ENCODE measurements at regions of chrX and their contacts with region 1.

Region 1: DNA sequence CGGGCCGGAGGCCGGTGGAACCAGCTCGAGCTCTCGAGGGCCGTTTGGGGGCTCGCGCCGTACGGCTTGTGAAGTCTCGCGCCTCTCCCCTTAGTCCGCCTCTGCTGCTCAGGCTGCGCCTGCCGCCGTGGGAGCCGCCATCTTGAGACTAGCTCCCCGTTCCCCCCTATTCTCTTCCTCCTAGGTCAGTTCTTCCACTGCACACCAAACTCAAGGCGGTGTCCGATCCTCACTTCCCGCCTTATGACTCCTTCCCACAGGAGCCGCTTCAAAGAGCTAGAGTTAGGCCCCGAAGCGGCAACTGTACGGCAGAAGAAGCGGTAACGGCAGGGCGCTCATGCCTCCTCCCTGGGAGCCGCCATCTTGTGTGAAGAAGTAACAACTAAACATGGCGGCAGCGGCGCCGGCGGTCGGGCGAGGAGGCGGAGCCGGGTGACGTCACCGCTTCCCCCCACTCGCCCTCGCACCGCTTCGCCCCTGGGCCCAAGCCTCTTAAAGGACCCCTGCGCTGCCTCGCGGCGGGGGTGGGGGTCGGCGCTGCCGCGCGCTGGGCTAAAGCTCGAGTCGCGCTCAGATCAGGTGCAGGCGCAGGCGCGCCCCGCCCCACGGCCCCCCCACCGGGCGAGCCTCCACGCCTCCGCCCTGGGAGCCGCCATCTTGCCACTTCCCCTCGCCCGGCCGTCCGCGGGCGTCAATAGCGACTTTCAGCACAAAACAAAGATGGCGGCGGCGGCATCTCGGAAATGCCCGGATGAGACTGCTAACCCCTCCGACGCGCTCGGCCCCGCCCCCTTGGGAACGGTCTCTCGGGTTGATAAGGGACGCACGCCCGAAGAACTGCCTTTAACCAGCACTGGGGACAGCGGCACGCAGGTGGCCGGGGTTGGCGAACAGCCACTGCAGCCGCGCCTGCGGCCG is at the start of gene HCFC1:
- DNase-seq: peak; percentile 82 to 98 (median 93)
- ATAC-seq: peak; percentile 65
- H3K4me3 ChIP-seq: peak within 1 kb of the TSS; percentile 97
- H3K4me3 Mint-ChIP-seq: peak within 1 kb of the TSS; percentile 91 to 100 (median 100)
- H3K27ac ChIP-seq: peak within 1 kb of the TSS; percentile 99
- H3K27ac Mint-ChIP-seq: peak within 1 kb of the TSS; percentile 93 to 100 (median 100)
- H3K4me1 ChIP-seq: peaks cover 28 to 29% of the 10 kb centered on the region in 2 donors
- H3K4me1 Mint-ChIP-seq: peaks cover 21 to 52% (median 34%) of the 10 kb centered on the region in 7 donors
- H3K27me3 ChIP-seq: no peaks in the 10 kb centered on the region
- H3K27me3 Mint-ChIP-seq: no peaks in the 10 kb centered on the region
- total RNA-seq, gene HCFC1: 52.3 to 106 (median 67.2) TPM

Region 2: DNA sequence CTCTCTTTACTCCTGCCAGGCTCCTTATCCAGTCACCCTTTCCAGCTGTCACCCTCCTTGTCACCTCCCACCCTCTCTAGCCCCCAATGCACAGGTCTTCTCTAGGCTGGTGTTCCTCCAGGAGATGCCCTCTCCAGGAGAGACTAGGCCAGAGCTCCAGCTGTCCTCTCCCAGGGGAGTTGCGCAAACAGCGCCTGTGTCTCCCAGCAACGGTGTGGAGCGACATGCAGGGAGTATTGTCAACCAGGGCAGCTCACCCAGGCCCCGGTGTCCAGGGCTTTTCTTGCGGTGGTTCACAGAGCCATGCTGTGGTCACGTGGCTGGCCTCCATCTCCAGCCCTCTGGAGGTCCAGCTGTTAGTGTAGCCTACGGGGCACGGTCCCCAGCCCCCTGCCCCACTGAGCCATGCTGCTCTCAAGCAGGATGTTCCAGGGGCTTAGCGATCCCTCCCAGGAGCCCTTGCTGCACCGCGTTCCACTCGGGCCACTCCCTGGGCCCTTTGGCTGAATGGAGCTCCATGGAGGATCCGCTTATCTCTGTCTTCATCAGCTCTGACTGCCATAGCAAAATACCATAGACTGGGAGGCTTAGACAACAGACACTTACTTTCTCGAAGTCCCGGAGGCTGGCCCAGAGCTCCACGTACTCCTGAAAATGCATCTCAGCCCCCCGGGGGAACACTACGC is 407.5 kb before region 1 on chrX:
- CTCF ChIA-PET with region 1: no interaction called
- POLR2A ChIA-PET with region 1: no interaction called
- intact Hi-C with region 1: no loop called
- DNase-seq: no peak
- ATAC-seq: no peak
- H3K4me3 ChIP-seq: no peak overlapping the region
- H3K4me3 Mint-ChIP-seq: no peak overlapping the region
- H3K27ac ChIP-seq: no peak overlapping the region
- H3K27ac Mint-ChIP-seq: peak overlapping the region in 1 of 9 donors; percentile 60
- H3K4me1 ChIP-seq: no peaks in the 10 kb centered on the region
- H3K4me1 Mint-ChIP-seq: peaks cover 0 to 4% (median 0%) of the 10 kb centered on the region in 7 donors
- H3K27me3 ChIP-seq: no peaks in the 10 kb centered on the region
- H3K27me3 Mint-ChIP-seq: no peaks in the 10 kb centered on the region

Region 3: DNA sequence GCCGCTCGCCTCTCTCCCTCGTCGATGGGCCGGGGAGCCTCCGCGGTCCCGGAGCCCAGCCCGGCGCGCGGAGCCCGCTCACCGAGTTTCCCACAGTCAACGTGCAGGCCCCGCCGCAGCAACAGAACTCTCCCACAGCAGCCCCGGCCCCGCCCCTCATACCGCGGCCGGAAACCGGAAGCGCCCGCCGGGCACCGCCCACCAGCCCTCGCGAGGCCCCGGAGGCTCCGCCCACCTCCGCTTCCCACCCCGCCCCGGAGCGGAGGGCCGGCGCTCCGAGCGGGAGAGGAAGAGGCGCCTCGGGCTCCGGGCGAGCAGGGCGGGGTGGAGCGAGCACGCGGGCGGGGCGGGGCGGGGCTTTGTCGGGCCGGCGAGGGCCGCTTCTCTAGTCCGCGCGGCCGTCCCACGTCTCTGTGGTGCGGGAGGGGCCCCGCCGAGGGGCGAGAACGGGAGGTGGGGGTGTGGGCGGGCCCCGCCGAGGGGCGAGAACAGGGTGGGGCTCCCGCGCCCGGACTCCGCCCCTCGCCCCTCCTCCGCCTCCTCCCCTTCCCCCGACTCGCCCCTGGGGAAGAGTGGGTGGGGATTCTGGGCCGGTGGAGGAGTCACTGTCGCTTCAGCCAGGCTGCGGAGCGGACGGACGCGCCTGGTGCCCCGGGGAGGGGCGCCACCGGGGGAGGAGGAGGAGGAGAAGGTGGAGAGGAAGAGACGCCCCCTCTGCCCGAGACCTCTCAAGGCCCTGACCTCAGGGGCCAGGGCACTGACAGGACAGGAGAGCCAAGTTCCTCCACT is 247.3 kb before region 1 on chrX and contains the starts of genes ABCD1 and BCAP31:
- CTCF ChIA-PET with region 1: no interaction called
- POLR2A ChIA-PET with region 1: interaction called, 4 read pairs
- intact Hi-C with region 1: loop called (anchors 1 kb)
- DNase-seq: peak; percentile 82 to 93 (median 91)
- ATAC-seq: peak; percentile 88
- H3K4me3 ChIP-seq: peak within 1 kb of the TSS; percentile 55
- H3K4me3 Mint-ChIP-seq: peak within 1 kb of the TSS; percentile 75 to 95 (median 86)
- H3K27ac ChIP-seq: peak within 1 kb of the TSS; percentile 80
- H3K27ac Mint-ChIP-seq: peak within 1 kb of the TSS in 8 of 9 donors; percentile 55 to 87 (median 72)
- H3K4me1 ChIP-seq: peaks cover 10 to 29% of the 10 kb centered on the region in 2 donors
- H3K4me1 Mint-ChIP-seq: peaks cover 9 to 37% (median 28%) of the 10 kb centered on the region in 7 donors
- H3K27me3 ChIP-seq: no peaks in the 10 kb centered on the region
- H3K27me3 Mint-ChIP-seq: no peaks in the 10 kb centered on the region
- total RNA-seq, gene ABCD1: 6.6 to 17.6 (median 10.2) TPM
- total RNA-seq, gene BCAP31: 80.2 to 153 (median 117) TPM

Region 4: GRCh38 chrX:153845842-153846241 is 125.9 kb before region 1 on chrX:
- CTCF ChIA-PET with region 1: no interaction called
- POLR2A ChIA-PET with region 1: no interaction called
- intact Hi-C with region 1: no loop called
- DNase-seq: no peak
- ATAC-seq: no peak
- H3K4me3 ChIP-seq: no peak overlapping the region
- H3K4me3 Mint-ChIP-seq: no peak overlapping the region
- H3K27ac ChIP-seq: no peak overlapping the region
- H3K27ac Mint-ChIP-seq: no peak overlapping the region
- H3K4me1 ChIP-seq: no peaks in the 10 kb centered on the region
- H3K4me1 Mint-ChIP-seq: no peaks in the 10 kb centered on the region
- H3K27me3 ChIP-seq: no peaks in the 10 kb centered on the region
- H3K27me3 Mint-ChIP-seq: peaks cover 0 to 34% (median 7%) of the 10 kb centered on the region in 5 donors

Region 5: DNA sequence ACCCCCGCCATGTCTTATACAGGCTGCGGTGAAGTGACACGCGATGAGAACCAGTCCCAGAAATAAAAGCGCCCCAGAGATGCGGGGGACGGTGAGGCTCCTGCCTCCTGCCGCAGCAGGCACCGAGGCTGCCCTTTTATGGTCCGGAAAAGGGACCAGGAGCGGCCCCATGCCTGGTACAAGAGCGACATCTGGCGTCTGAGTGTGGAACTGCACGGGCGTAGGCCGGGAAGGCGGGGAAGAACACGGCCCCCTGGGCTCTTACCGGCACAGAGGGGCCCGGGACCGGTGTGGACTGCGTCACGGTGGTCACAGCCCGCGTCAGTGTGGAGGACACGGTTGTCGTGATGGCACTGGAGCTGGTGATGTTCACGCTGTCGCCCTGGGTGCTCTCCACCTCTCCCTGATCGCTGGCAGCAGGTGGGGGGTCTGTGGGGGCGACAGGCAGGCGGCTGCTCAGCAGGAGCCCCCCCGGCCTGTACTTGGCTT is 18.3 kb before region 1 on chrX:
- CTCF ChIA-PET with region 1: interaction called, 22 read pairs
- POLR2A ChIA-PET with region 1: interaction called, 63 read pairs
- intact Hi-C with region 1: loop called in 1 of 2 experiments (anchors 2 kb)
- DNase-seq: peak; percentile 61 to 87 (median 78)
- ATAC-seq: peak; percentile 89
- H3K4me3 ChIP-seq: no peak overlapping the region
- H3K4me3 Mint-ChIP-seq: no peak overlapping the region
- H3K27ac ChIP-seq: no peak overlapping the region
- H3K27ac Mint-ChIP-seq: peak overlapping the region in 6 of 9 donors; percentile 4 to 82 (median 52)
- H3K4me1 ChIP-seq: peaks cover 4 to 6% of the 10 kb centered on the region in 2 donors
- H3K4me1 Mint-ChIP-seq: peaks cover 0 to 22% (median 7%) of the 10 kb centered on the region in 7 donors
- H3K27me3 ChIP-seq: no peaks in the 10 kb centered on the region
- H3K27me3 Mint-ChIP-seq: no peaks in the 10 kb centered on the region

Region 6: GRCh38 chrX:154019633-154020528 is 48.2 kb after region 1 on chrX and contains the start of gene IRAK1:
- CTCF ChIA-PET with region 1: interaction called, 3 read pairs
- POLR2A ChIA-PET with region 1: interaction called, 14 read pairs
- intact Hi-C with region 1: loop called in 1 of 2 experiments (anchors 2 kb)
- DNase-seq: peak; percentile 20 to 77 (median 42)
- ATAC-seq: peak; percentile 89
- H3K4me3 ChIP-seq: peak within 1 kb of the TSS; percentile 52
- H3K4me3 Mint-ChIP-seq: peak within 1 kb of the TSS; percentile 83 to 93 (median 88)
- H3K27ac ChIP-seq: peak within 1 kb of the TSS; percentile 85
- H3K27ac Mint-ChIP-seq: peak within 1 kb of the TSS; percentile 85 to 97 (median 92)
- H3K4me1 ChIP-seq: peaks cover 4 to 6% of the 10 kb centered on the region in 2 donors
- H3K4me1 Mint-ChIP-seq: peaks cover 0 to 17% (median 11%) of the 10 kb centered on the region in 7 donors
- H3K27me3 ChIP-seq: no peaks in the 10 kb centered on the region
- H3K27me3 Mint-ChIP-seq: no peaks in the 10 kb centered on the region
- total RNA-seq, gene IRAK1: 50.6 to 120 (median 61.6) TPM

Region 7: GRCh38 chrX:154378782-154379591 is 407.3 kb after region 1 on chrX and contains the start of gene EMD:
- CTCF ChIA-PET with region 1: no interaction called
- POLR2A ChIA-PET with region 1: interaction called, 3 read pairs
- intact Hi-C with region 1: loop called (anchors 1 kb)
- DNase-seq: peak; percentile 88 to 98 (median 96)
- ATAC-seq: peak; percentile 87
- H3K4me3 ChIP-seq: peak within 1 kb of the TSS; percentile 68
- H3K4me3 Mint-ChIP-seq: peak within 1 kb of the TSS; percentile 73 to 88 (median 84)
- H3K27ac ChIP-seq: peak within 1 kb of the TSS; percentile 99
- H3K27ac Mint-ChIP-seq: peak within 1 kb of the TSS; percentile 72 to 95 (median 92)
- H3K4me1 ChIP-seq: peaks cover 10 to 18% of the 10 kb centered on the region in 2 donors
- H3K4me1 Mint-ChIP-seq: peaks cover 4 to 21% (median 12%) of the 10 kb centered on the region in 7 donors
- H3K27me3 ChIP-seq: no peaks in the 10 kb centered on the region
- H3K27me3 Mint-ChIP-seq: no peaks in the 10 kb centered on the region
- total RNA-seq, gene EMD: 53.5 to 141 (median 89.9) TPM

Region 8: GRCh38 chrX:154762523-154763289 is 791.0 kb after region 1 on chrX and contains the start of gene DKC1:
- CTCF ChIA-PET with region 1: no interaction called
- POLR2A ChIA-PET with region 1: no interaction called
- intact Hi-C with region 1: loop called in 1 of 2 experiments (anchors 5 kb)
- DNase-seq: peak; percentile 85 to 95 (median 93)
- ATAC-seq: peak; percentile 94
- H3K4me3 ChIP-seq: peak within 1 kb of the TSS; percentile 61
- H3K4me3 Mint-ChIP-seq: peak within 1 kb of the TSS; percentile 85 to 92 (median 90)
- H3K27ac ChIP-seq: peak within 1 kb of the TSS; percentile 72
- H3K27ac Mint-ChIP-seq: peak within 1 kb of the TSS; percentile 89 to 97 (median 92)
- H3K4me1 ChIP-seq: peaks cover 9% of the 10 kb centered on the region in 2 donors
- H3K4me1 Mint-ChIP-seq: peaks cover 0 to 24% (median 18%) of the 10 kb centered on the region in 7 donors
- H3K27me3 ChIP-seq: no peaks in the 10 kb centered on the region
- H3K27me3 Mint-ChIP-seq: no peaks in the 10 kb centered on the region
- total RNA-seq, gene DKC1: 50.5 to 75.0 (median 66.5) TPM